GM12878 (cell line): ENCODE measurements at regions of chr13 and their contacts with region 1.

Region 1: GRCh38 chr13:80132741-80133601 is 208.0 kb downstream of the SPRY2 start:
- DNase-seq: no peak
- ATAC-seq: peak; percentile 56
- H3K4me3 ChIP-seq: no peak overlapping the region
- H3K27ac ChIP-seq: no peak overlapping the region
- H3K4me1 ChIP-seq: no peaks in the 10 kb centered on the region
- H3K27me3 ChIP-seq: no peaks in the 10 kb centered on the region
- CTCF ChIP-seq: no peak
- EP300 ChIP-seq: no peak
- POLR2A ChIP-seq: no peak
- RAD21 ChIP-seq: no peak

Region 2: DNA sequence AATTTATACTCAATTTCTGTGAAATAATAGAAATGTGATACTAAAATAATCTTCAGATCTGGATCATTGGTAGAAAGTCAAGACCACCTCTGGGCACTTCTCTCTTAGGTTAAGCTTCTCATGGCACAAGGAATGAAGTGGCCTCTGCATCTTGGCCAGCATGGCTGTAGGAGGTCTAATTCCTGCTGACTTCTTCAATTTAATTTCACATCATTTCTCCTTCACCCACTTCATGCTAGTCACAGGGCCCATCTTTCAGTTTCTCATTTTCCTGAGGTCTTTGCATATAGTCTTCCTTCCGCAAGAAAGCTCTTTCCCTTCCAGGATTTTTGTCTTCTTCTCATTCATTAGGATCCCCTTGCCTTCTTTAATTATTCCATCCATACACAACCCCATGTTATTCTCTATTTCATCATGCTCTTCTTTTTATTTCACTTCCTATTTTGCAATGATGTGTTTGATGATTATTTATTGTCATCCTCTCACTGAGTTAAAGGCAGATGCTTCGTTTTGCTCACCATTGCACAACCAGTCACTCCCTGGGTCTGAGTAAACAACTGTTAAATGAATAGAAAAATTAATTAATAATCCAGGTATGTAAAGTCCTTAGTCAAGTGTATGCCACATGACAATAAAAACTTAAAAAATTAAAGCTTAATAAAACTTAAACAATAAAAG is 189.5 kb before region 1 on chr13:
- CTCF ChIA-PET with region 1: no interaction called
- POLR2A ChIA-PET with region 1: no interaction called
- RAD21 ChIA-PET with region 1: no interaction called
- SMC1A ChIA-PET with region 1: no interaction called
- in situ Hi-C with region 1: no loop called
- intact Hi-C with region 1: no loop called
- DNase-seq: no peak
- ATAC-seq: no peak
- H3K4me3 ChIP-seq: no peak overlapping the region
- H3K27ac ChIP-seq: no peak overlapping the region
- H3K4me1 ChIP-seq: no peaks in the 10 kb centered on the region
- H3K27me3 ChIP-seq: no peaks in the 10 kb centered on the region
- CTCF ChIP-seq: no peak
- EP300 ChIP-seq: no peak
- POLR2A ChIP-seq: no peak
- RAD21 ChIP-seq: no peak

Region 3: DNA sequence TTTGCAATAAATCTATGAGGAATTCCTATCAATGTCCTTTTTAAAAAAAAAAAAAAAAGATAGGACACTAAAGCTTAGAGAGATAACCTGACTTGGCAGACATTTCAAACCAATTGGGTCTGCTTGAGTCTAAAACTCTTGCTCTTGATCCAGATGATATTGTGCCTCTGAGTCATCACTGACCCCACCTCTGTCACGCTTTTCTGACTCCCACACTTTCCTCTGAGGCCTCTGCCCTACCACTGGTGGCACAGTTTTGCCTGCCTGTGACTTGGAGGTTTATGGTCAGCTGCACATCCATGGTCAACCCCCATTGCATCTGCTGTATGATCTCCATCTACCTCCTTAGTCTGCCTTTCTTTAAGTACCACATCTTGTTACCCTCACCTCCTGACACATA is 120.7 kb before region 1 on chr13:
- CTCF ChIA-PET with region 1: no interaction called
- POLR2A ChIA-PET with region 1: no interaction called
- RAD21 ChIA-PET with region 1: no interaction called
- SMC1A ChIA-PET with region 1: no interaction called
- in situ Hi-C with region 1: no loop called
- intact Hi-C with region 1: no loop called
- DNase-seq: no peak
- ATAC-seq: peak; percentile 90
- H3K4me3 ChIP-seq: no peak overlapping the region
- H3K27ac ChIP-seq: no peak overlapping the region
- H3K4me1 ChIP-seq: no peaks in the 10 kb centered on the region
- H3K27me3 ChIP-seq: no peaks in the 10 kb centered on the region
- CTCF ChIP-seq: no peak
- EP300 ChIP-seq: no peak
- POLR2A ChIP-seq: no peak
- RAD21 ChIP-seq: no peak

Region 4: GRCh38 chr13:80144493-80144892 is 11.5 kb after region 1 on chr13:
- CTCF ChIA-PET with region 1: interaction called, 5 read pairs
- POLR2A ChIA-PET with region 1: interaction called, 3 read pairs
- RAD21 ChIA-PET with region 1: interaction called, 4 read pairs
- SMC1A ChIA-PET with region 1: interaction called, 11 read pairs
- in situ Hi-C with region 1: no loop called
- intact Hi-C with region 1: no loop called
- DNase-seq: no peak
- ATAC-seq: peak; percentile 14; the same call in 1 of the 3 replicates
- H3K4me3 ChIP-seq: no peak overlapping the region
- H3K27ac ChIP-seq: no peak overlapping the region
- H3K4me1 ChIP-seq: no peaks in the 10 kb centered on the region
- H3K27me3 ChIP-seq: no peaks in the 10 kb centered on the region
- CTCF ChIP-seq: no peak
- EP300 ChIP-seq: no peak
- POLR2A ChIP-seq: no peak
- RAD21 ChIP-seq: no peak

Region 5: GRCh38 chr13:80428341-80429096 is 295.5 kb after region 1 on chr13:
- CTCF ChIA-PET with region 1: no interaction called
- POLR2A ChIA-PET with region 1: no interaction called
- RAD21 ChIA-PET with region 1: no interaction called
- SMC1A ChIA-PET with region 1: no interaction called
- in situ Hi-C with region 1: no loop called
- intact Hi-C with region 1: no loop called
- DNase-seq: no peak
- ATAC-seq: no peak
- H3K4me3 ChIP-seq: no peak overlapping the region
- H3K27ac ChIP-seq: no peak overlapping the region
- H3K4me1 ChIP-seq: no peaks in the 10 kb centered on the region
- H3K27me3 ChIP-seq: no peaks in the 10 kb centered on the region
- CTCF ChIP-seq: no peak
- EP300 ChIP-seq: no peak
- POLR2A ChIP-seq: no peak
- RAD21 ChIP-seq: no peak